ENCODE measurements at regions of chr2 and their contacts with region 1.

Region 1: DNA sequence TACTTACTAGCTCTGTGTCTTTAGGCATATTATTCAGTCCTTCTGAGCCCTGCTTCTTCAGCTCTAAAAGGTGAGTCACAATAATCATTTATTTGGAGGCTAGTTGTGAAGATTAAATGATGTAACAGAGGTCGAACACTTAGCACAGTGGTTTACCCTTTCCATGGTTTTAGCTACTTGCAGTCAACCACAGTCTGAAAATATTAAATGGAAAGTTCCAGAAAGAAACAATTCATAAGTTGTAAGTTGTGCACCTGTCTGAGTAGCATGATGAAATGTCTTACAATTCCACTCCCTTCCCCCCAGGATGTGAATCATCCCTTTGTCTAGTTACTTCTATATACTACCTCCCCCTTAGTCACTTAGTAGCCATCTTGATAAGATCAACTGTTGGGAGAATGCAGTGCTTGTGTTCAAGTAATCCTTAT is 217.6 kb upstream of the THUMPD2 start:
- DNase-seq: peak; percentile 28
- ATAC-seq: peak; percentile 88
- H3K4me3 Mint-ChIP-seq: no peak overlapping the region
- H3K27ac Mint-ChIP-seq: peak overlapping the region; percentile 82
- H3K4me1 Mint-ChIP-seq: peaks cover 22% of the 10 kb centered on the region
- H3K27me3 Mint-ChIP-seq: no peaks in the 10 kb centered on the region

Region 2: GRCh38 chr2:39919511-39920306 is 77.0 kb before region 1 on chr2:
- CTCF ChIA-PET with region 1: interaction called, 3 read pairs
- POLR2A ChIA-PET with region 1: no interaction called
- intact Hi-C with region 1: loop called (anchors 5 kb)
- DNase-seq: peak; percentile 38
- ATAC-seq: peak; percentile 57
- H3K4me3 Mint-ChIP-seq: peak overlapping the region; percentile 67
- H3K27ac Mint-ChIP-seq: peak overlapping the region; percentile 35
- H3K4me1 Mint-ChIP-seq: peaks cover 28% of the 10 kb centered on the region
- H3K27me3 Mint-ChIP-seq: peaks cover 2% of the 10 kb centered on the region

Region 3: DNA sequence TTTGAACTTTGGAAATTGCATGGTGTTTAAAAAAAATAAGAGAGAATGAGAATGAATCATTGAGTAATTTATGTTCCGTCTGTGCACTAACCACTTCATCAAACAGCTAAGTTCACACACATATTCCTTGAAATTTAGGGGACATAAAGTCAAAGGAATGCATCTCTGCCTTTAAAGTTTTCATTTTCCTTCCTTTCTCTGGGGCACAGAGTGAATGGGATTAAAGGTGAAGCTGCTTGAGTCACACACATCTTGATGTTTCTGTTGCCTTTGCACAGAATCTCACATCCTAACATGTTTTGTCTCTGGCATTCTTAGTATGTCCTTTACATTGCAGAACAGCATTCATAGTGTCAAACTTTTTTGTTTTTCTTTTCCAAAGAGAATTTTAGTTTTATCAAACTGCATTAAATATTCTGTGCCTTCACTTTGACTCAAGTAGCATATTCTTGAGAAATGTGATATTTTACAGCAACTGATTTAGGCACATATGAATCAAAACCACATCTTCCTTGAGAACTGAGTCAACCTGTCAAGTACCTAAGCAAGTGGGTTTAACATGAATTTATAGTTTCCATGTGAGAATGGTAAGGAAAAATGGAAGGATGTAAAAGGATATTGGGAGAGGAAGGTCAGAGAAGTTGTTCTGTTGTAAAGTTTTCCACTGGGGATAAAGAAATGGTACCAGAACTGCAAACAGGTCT is 48.5 kb before region 1 on chr2:
- CTCF ChIA-PET with region 1: no interaction called
- POLR2A ChIA-PET with region 1: no interaction called
- intact Hi-C with region 1: loop called (anchors 2 to 5 kb)
- DNase-seq: no peak
- ATAC-seq: peak; percentile 63
- H3K4me3 Mint-ChIP-seq: peak overlapping the region; percentile 0
- H3K27ac Mint-ChIP-seq: peak overlapping the region; percentile 91
- H3K4me1 Mint-ChIP-seq: peaks cover 49% of the 10 kb centered on the region
- H3K27me3 Mint-ChIP-seq: peaks cover 3% of the 10 kb centered on the region

Region 4: GRCh38 chr2:39981883-39982311 is 14.8 kb before region 1 on chr2:
- CTCF ChIA-PET with region 1: no interaction called
- POLR2A ChIA-PET with region 1: no interaction called
- intact Hi-C with region 1: no loop called
- DNase-seq: no peak
- ATAC-seq: no peak
- H3K4me3 Mint-ChIP-seq: no peak overlapping the region
- H3K27ac Mint-ChIP-seq: no peak overlapping the region
- H3K4me1 Mint-ChIP-seq: no peaks in the 10 kb centered on the region
- H3K27me3 Mint-ChIP-seq: no peaks in the 10 kb centered on the region

Region 5: GRCh38 chr2:40032650-40033319 is 36.1 kb after region 1 on chr2:
- CTCF ChIA-PET with region 1: no interaction called
- POLR2A ChIA-PET with region 1: no interaction called
- intact Hi-C with region 1: loop called (anchors 2 kb)
- DNase-seq: no peak
- ATAC-seq: peak; percentile 92
- H3K4me3 Mint-ChIP-seq: no peak overlapping the region
- H3K27ac Mint-ChIP-seq: peak overlapping the region; percentile 74
- H3K4me1 Mint-ChIP-seq: peaks cover 22% of the 10 kb centered on the region
- H3K27me3 Mint-ChIP-seq: peaks cover 2% of the 10 kb centered on the region

Region 6: DNA sequence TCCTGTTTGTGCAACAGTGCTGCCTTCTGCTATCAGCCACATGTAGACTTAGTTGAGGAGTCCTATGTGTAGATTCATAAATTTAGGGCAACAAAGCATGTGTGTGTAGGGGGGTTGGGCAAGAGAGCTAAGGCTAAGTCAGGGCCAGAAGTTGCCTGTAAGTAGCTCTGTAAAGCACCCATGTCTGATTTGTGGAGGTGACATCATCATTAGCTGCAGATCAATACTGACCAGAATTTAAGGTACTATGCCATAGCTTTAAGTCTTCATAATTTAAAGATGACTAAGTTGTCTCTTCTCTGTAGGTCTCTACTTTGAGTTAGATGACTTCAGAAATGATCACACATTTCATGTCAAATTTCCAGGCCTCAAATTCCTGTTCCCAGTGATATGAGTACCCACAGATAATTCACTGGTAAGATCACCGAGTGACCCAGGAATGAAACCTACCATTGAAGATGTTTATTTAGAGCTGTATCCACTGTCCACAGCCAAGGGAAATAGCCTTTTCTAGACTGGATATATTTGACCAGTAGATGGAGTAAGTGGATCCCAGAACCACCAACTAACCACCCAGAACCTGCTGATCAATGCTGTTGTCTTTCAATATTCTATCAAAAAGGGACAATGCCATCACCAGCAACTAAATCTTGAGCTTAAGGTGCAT is 216.3 kb after region 1 on chr2:
- CTCF ChIA-PET with region 1: no interaction called
- POLR2A ChIA-PET with region 1: no interaction called
- intact Hi-C with region 1: loop called in 1 of 2 experiments (anchors 5 kb)
- DNase-seq: no peak
- ATAC-seq: no peak
- H3K4me3 Mint-ChIP-seq: no peak overlapping the region
- H3K27ac Mint-ChIP-seq: peak overlapping the region; percentile 14
- H3K4me1 Mint-ChIP-seq: peaks cover 26% of the 10 kb centered on the region
- H3K27me3 Mint-ChIP-seq: no peaks in the 10 kb centered on the region